GM18951 (cell line): ENCODE measurements at regions of chrX and their contacts with region 1.

Region 1: GRCh38 chrX:66408507-66408906 is 230.4 kb downstream of the EDA2R start:
- POLR2A ChIP-seq: no peak

Region 2: GRCh38 chrX:65595460-65595876 is 813.0 kb before region 1 on chrX:
- in situ Hi-C with region 1: loop called (anchors 25 kb)
- POLR2A ChIP-seq: no peak

Region 3: DNA sequence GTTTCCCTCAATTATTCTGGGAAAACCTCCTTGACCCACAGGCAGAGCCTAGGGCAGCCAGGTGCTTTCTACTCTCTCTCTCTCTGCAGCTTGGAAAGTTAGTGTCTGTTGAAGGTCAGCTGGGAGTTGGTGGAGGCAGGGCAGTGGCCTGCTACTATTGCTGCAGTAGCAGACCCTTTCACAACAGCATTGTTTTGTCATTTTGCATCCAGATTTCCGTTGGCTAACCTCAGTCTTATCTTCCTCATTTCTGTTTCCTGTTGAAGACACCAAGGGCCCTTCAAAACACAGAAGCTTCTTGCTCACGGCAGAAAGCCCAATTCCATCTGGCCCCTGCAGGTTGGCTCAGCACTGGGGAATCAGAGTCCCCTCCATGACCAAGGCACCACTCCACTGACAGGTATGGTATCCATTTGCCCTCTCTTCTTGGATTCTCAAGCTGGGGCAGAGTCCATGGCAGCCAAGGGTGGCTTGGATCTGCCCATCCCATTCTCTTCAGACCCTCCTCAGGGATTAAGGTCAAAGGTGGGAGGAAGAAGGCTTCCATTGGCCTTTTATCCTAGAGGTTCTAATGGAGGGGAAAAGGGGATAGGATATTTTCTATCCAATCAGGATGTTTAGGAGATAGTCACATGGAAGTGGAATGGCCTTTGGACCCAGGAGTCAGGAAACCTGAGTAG is 393.2 kb before region 1 on chrX:
- in situ Hi-C with region 1: loop called (anchors 25 kb)
- POLR2A ChIP-seq: peak; percentile 32

Region 4: DNA sequence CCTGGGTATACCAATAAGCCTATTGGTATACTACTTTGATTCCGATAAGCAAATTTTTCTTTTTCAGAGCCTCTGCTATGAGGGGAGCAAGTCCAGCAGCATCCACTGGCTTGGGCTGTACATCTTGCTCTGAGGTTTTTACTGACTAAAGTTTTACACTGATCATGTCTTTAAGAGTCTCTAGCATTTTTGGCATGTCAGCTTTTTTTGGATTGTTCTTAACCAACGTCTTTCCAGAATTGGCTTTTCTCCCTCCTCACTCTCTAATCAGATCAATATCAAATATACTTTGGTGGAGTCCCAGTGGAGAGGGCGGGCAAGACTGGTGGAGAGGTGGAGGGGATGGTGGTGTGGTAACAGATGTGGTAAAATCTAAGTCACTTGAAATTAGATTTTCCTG is 47.6 kb before region 1 on chrX:
- in situ Hi-C with region 1: no loop called
- POLR2A ChIP-seq: no peak